ENCODE measurements at regions of chr3 and their contacts with region 1.

Region 1: DNA sequence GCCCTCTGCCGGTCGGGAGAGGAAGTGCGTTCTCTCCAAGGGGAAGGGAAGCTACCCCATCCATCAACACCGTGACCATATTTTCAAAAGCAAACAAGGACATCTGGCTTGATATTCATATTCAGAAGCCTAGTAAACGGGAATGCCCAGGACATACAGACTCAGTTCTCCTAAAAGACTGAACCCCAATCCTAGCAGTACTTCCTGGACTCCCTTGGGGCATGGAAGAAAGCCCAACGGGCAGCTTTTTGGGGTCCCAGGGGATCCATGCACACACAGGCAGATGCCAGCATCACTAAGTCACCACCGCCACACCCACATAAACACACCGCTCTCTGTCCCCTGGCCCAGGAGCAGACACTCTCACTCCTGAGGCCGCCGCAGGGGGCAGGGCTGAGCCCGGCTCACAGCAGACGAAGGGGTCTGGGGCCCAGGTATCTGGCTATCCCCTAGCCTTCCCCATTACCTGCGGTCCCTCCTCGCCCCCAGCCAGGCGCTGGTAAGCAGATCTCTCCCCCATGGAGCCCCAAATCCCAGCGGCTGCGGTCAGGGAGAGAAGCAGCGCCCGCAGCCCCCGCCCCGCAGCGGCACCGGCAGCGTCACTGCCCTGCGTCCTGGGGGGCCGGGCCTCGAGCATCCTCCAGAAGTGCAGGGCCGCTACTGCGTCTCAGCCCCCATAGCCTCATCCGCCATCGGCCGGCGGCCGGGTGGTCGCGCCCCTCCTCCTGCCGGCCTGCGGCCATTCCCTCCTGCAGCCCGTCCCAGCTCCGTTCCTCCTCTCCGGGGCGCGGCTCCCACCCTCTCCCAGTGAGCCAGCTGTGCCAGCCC is 13.4 kb downstream of the TNK2 start:
- DNase-seq: peak; percentile 94
- ATAC-seq: peak; percentile 62
- H3K4me3 ChIP-seq: peak overlapping the region; percentile 94
- H3K27ac ChIP-seq: peak overlapping the region; percentile 42
- H3K4me1 ChIP-seq: peaks cover 46% of the 10 kb centered on the region
- H3K27me3 ChIP-seq: no peaks in the 10 kb centered on the region
- CTCF ChIP-seq: peak; percentile 86

Region 2: GRCh38 chr3:195815169-195815771 is 79.7 kb before region 1 on chr3:
- CTCF ChIA-PET with region 1: no interaction called
- POLR2A ChIA-PET with region 1: no interaction called
- intact Hi-C with region 1: no loop called
- DNase-seq: peak; percentile 47
- ATAC-seq: peak; percentile 66
- H3K4me3 ChIP-seq: no peak overlapping the region
- H3K27ac ChIP-seq: no peak overlapping the region
- H3K4me1 ChIP-seq: no peaks in the 10 kb centered on the region
- H3K27me3 ChIP-seq: peaks cover 8% of the 10 kb centered on the region
- CTCF ChIP-seq: no peak

Region 3: DNA sequence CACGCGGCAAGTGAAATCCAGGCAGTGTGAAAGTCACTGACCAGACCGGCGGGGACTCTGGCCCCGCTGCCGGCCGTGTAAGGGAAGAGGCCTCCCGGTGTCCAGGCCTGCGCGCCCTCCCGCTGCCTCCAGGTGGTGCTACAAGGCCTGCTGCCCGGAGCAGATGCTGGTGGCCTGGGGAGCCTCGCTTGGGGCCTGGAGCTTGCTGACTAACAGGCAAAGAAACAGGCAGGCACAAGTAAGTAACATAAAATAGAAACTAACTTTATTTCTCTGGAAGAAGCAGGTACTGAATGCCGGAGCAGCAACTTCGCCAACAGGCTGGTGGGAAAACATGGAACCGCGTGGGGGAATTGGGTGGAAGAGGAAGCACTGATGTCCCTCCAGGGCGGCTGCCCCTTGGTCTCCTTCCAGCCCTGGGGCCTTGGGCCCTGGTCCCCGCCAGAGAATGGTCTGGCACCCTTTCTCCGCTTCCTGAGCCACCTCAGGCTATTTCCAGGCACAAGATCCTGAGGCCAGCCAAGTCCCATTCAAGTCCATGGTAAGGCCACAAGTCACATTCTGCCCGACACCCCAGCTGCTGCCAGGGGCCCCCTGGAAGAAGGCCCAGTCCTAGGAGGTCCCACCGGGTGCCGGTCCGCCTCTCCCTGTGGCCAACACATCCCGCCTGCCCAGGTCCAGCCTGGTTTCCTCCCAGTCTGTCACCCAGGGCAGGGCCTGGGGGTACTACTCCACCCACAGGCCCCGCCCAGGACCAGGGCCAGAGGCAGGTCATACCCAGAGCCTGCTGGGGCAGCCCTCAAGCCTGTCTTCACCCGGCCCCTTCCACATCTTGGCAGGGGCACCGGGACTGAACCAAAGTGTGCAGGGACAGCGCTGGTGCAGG is 31.6 kb before region 1 on chr3:
- CTCF ChIA-PET with region 1: interaction called, 42 read pairs
- POLR2A ChIA-PET with region 1: interaction called, 4 read pairs
- intact Hi-C with region 1: loop called (anchors 1 kb)
- DNase-seq: peak; percentile 88
- ATAC-seq: peak; percentile 94
- H3K4me3 ChIP-seq: no peak overlapping the region
- H3K27ac ChIP-seq: peak overlapping the region; percentile 29
- H3K4me1 ChIP-seq: peaks cover 14% of the 10 kb centered on the region
- H3K27me3 ChIP-seq: no peaks in the 10 kb centered on the region
- CTCF ChIP-seq: peak; percentile 95

Region 4: GRCh38 chr3:195870442-195870841 is 24.6 kb before region 1 on chr3:
- CTCF ChIA-PET with region 1: interaction called, 3 read pairs
- POLR2A ChIA-PET with region 1: no interaction called
- intact Hi-C with region 1: loop called (anchors 2 kb)
- DNase-seq: peak; percentile 94
- ATAC-seq: peak; percentile 98
- H3K4me3 ChIP-seq: peak overlapping the region; percentile 36; the same call in 1 of the 2 replicates
- H3K27ac ChIP-seq: peak overlapping the region; percentile 94
- H3K4me1 ChIP-seq: peaks cover 28% of the 10 kb centered on the region
- H3K27me3 ChIP-seq: no peaks in the 10 kb centered on the region
- CTCF ChIP-seq: no peak

Region 5: DNA sequence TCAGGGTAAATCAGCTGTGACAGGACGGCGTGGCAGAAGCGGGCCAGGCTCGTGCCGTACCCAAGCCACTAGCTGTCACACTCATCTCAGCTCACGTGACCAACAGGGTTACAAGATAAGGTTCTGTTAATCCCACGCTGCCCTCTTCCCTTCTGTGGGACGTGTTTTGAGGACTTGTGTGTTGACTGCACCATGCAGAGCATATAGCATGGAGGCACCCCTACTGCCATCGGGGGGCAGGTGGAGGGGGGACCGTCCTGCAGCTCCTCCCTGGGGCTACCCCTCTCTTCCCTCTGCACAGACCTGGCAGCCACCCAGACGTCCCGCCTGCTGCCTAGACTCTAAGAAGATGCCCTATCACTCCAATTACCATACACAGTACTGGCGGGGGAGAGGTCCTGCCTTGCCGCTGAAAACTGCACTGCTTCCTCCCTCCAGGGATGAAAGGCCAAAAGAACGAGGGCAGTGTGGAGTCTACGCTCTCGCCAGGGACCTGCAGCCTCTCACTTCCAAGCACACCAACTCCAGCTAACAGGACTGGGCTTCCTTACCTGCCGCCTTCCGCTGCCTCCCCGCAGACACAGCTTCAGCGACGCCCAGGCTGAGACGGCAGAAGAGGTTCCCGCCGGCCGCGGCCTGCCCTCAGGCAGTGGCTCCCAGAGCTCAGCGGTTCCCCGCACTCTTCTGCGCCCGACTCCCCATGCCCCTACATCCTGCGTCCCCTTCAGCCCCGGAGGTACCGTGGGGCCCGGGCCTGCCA is 13.1 kb after region 1 on chr3 and contains the start of gene TNK2:
- CTCF ChIA-PET with region 1: interaction called, 8 read pairs
- POLR2A ChIA-PET with region 1: interaction called, 8 read pairs
- intact Hi-C with region 1: loop called (anchors 1 kb)
- DNase-seq: peak; percentile 56
- ATAC-seq: peak; percentile 14
- H3K4me3 ChIP-seq: peak within 1 kb of the TSS; percentile 74
- H3K27ac ChIP-seq: no peak within 1 kb of the TSS
- H3K4me1 ChIP-seq: peaks cover 55% of the 10 kb centered on the region
- H3K27me3 ChIP-seq: no peaks in the 10 kb centered on the region
- CTCF ChIP-seq: no peak
- total RNA-seq, gene TNK2: 43.7 and 49.3 TPM in 2 replicates

Region 6: DNA sequence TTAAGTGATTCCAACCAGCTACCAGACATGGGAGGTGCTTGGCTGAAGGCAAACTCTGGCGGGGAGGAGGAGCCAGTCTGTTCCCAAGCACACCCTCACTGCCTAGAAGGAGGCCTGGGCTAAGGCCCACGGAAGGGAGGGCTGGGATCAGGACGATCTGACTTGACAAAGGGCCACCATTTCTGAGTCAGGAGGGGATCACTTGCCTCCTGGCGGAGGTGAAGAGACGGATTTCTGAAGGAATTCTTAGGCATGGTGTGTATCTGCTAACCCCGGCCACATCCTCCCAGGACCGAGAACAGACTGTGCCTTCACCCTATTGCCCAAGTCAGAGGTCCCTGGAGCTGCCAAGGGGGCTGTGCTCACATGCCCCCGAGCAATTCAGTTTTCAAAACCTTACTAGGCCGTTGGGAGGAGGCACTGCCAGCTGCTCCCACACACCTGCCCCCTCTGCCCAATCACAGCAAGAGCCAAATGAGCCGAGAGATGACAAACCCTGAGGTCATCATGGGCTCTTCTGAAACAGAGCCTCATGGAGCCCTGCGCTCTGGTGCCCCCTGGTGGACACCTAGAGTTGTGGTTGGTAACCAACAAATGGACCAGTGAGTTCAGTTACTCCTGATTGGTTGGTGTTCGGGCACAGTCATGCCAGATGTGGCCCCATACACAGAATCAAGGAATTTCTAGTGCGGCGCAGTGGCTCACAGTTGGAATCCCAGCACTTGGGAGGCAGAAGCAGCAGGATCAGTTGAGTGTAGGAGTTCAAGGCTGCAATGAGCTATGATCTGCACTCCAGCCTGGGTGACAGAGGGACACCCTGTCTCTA is 19.9 kb after region 1 on chr3:
- CTCF ChIA-PET with region 1: interaction called, 15 read pairs
- POLR2A ChIA-PET with region 1: interaction called, 8 read pairs
- intact Hi-C with region 1: loop called (anchors 1 kb)
- DNase-seq: peak; percentile 99
- ATAC-seq: peak; percentile 92
- H3K4me3 ChIP-seq: peak overlapping the region; percentile 54
- H3K27ac ChIP-seq: peak overlapping the region; percentile 88
- H3K4me1 ChIP-seq: peaks cover 36% of the 10 kb centered on the region
- H3K27me3 ChIP-seq: no peaks in the 10 kb centered on the region
- CTCF ChIP-seq: peak; percentile 97

Region 7: DNA sequence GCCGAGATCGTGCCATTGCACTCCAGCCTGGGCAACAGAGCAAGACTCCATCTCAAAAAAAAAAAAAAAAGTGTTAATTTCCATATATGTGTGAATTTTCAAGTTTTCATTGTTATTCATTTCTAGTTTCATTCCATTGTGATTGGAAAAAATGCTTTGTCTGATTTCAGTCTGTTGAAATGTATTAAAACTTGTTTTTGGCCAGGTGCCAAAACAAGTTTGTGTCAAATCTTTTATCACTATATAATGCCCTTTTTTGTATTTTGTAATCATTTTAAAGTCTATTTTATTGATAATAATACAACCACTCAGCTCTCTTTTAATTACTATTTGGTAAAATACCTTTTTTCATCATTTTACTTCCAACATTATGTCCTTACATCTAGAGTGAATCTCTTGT is 144.4 kb after region 1 on chr3:
- CTCF ChIA-PET with region 1: no interaction called
- POLR2A ChIA-PET with region 1: no interaction called
- intact Hi-C with region 1: no loop called
- DNase-seq: no peak
- ATAC-seq: no peak
- H3K4me3 ChIP-seq: no peak overlapping the region
- H3K27ac ChIP-seq: no peak overlapping the region
- H3K4me1 ChIP-seq: no peaks in the 10 kb centered on the region
- H3K27me3 ChIP-seq: no peaks in the 10 kb centered on the region
- CTCF ChIP-seq: no peak

Measured in PC-3 (cell line).